Naive thymus-derived CD4-positive, alpha-beta T cell (primary cell): ENCODE measurements at regions of chr4 and their contacts with region 1.

Region 1: DNA sequence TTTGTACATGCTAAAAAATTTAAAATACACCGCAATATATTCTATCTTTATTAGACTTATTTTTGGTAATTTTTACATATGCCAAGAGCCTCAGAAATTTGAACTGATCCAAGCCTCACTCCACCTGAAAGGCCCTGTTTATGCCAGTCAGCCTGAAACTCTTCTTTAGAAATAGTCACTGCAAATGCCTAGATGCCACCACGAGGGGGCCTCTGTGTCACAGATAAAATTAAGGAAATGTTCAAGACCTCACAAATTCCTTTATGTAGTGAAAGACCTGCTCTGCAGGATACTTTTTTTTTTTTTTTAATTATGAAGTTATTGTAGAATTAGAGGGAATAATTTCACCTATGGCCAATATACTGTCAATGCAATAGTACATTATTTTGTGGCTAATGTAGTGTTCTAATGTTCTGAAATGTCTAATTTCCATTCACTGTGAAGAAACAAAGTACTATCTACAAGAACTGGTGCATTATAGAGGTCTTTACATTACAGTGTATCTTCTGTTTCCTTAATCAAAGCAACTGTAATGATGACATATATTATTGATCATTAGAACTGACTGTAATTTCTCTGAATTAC is 69.8 kb downstream of the DTHD1 start:
- DNase-seq: peak; percentile 45 to 76 (median 68)
- ATAC-seq: peak; percentile 91
- H3K4me3 ChIP-seq: no peak overlapping the region
- H3K4me3 Mint-ChIP-seq: no peak overlapping the region
- H3K27ac ChIP-seq: no peak overlapping the region
- H3K27ac Mint-ChIP-seq: peak overlapping the region in 1 of 9 donors; percentile 4
- H3K4me1 ChIP-seq: no peaks in the 10 kb centered on the region
- H3K4me1 Mint-ChIP-seq: peaks cover 0 to 31% (median 0%) of the 10 kb centered on the region in 7 donors
- H3K27me3 ChIP-seq: no peaks in the 10 kb centered on the region
- H3K27me3 Mint-ChIP-seq: peaks cover 0 to 19% (median 0%) of the 10 kb centered on the region in 5 donors

Region 2: DNA sequence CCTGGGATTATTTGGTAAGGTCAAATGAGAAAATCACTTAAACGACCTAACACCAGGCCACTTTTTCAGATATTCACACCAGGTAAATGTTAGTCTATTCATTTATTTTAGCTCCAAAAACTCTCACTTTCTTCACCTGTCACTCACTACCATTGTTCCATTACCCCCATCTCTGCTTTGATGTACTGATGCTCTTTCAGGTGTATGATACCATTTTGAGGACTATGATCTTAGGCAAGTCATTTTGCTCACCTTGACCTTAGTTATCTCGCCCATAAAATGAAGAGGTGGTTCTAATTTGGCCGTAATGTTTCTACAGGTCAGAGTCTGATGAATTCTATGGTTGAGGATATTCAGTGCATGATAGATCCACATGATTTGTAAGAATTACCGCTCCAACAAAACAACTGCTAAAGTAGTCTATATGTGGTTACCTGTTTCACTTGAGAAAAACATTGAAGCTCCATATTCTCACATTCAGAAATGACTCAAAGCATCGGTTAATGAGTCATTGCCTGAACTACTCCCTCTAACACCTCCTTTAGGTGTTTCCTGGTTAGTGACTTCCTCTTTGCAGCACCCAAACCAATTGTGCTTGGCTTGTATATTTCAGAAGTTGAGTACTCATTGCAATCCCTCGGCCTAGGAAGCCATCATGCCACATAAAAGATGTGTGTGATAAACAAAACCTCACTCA is 65.2 kb before region 1 on chr4:
- CTCF ChIA-PET with region 1: no interaction called
- POLR2A ChIA-PET with region 1: no interaction called
- intact Hi-C with region 1: loop called in 1 of 2 experiments (anchors 1 kb)
- DNase-seq: peak in 8 of 9 donors; percentile 15 to 62 (median 47)
- ATAC-seq: peak; percentile 93
- H3K4me3 ChIP-seq: peak overlapping the region; percentile 22
- H3K4me3 Mint-ChIP-seq: peak overlapping the region in 7 of 10 donors; percentile 25 to 80 (median 38)
- H3K27ac ChIP-seq: peak overlapping the region; percentile 8
- H3K27ac Mint-ChIP-seq: peak overlapping the region in 8 of 9 donors; percentile 38 to 96 (median 71)
- H3K4me1 ChIP-seq: peaks cover 6 to 28% of the 10 kb centered on the region in 2 donors
- H3K4me1 Mint-ChIP-seq: peaks cover 5 to 65% (median 11%) of the 10 kb centered on the region in 7 donors
- H3K27me3 ChIP-seq: no peaks in the 10 kb centered on the region
- H3K27me3 Mint-ChIP-seq: no peaks in the 10 kb centered on the region

Region 3: DNA sequence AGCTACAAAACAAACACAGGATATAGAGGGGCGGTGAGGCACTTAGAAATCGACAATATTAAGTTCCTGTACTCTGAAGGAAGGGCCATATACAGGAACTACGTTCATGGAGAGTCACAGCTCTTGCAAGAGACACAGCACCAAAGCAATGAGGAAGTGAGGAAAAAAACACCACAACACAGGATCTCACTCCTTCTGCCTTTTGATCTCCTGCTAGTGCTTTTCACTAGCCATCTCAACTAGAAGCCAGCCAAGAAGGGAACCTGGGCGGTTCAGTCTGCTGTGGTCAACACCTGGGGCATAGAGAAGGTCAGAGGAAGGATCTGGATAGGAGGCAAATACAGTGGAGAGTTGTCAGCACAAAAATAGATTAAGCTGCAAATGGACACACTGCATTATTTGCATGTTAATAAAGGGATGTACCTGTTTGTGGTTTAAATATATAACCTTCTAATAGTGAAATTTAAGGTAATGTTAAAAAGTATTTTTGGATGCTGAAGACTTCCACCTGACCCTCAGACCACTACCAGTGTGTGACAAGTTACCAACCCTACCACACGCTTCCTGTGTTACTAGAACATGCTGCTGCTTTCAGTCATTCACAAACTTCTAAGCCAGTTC is 34.9 kb after region 1 on chr4:
- CTCF ChIA-PET with region 1: no interaction called
- POLR2A ChIA-PET with region 1: no interaction called
- intact Hi-C with region 1: loop called (anchors 1 kb)
- DNase-seq: peak; percentile 8 to 89 (median 82)
- ATAC-seq: peak; percentile 99
- H3K4me3 ChIP-seq: peak overlapping the region; percentile 29
- H3K4me3 Mint-ChIP-seq: peak overlapping the region; percentile 46 to 84 (median 70)
- H3K27ac ChIP-seq: peak overlapping the region; percentile 70
- H3K27ac Mint-ChIP-seq: peak overlapping the region; percentile 92 to 99 (median 94)
- H3K4me1 ChIP-seq: peaks cover 22% of the 10 kb centered on the region in 2 donors
- H3K4me1 Mint-ChIP-seq: peaks cover 19 to 51% (median 40%) of the 10 kb centered on the region in 7 donors
- H3K27me3 ChIP-seq: no peaks in the 10 kb centered on the region
- H3K27me3 Mint-ChIP-seq: peaks cover 0 to 11% (median 0%) of the 10 kb centered on the region in 5 donors

Region 4: GRCh38 chr4:36399762-36400353 is 48.7 kb after region 1 on chr4:
- CTCF ChIA-PET with region 1: interaction called, 62 read pairs
- POLR2A ChIA-PET with region 1: interaction called, 3 read pairs
- intact Hi-C with region 1: loop called (anchors 1 kb)
- DNase-seq: peak in 6 of 9 donors; percentile 37 to 59 (median 56)
- ATAC-seq: peak; percentile 81
- H3K4me3 ChIP-seq: no peak overlapping the region
- H3K4me3 Mint-ChIP-seq: no peak overlapping the region
- H3K27ac ChIP-seq: no peak overlapping the region
- H3K27ac Mint-ChIP-seq: no peak overlapping the region
- H3K4me1 ChIP-seq: peaks cover 0 to 3% of the 10 kb centered on the region in 2 donors
- H3K4me1 Mint-ChIP-seq: peaks cover 0 to 9% (median 6%) of the 10 kb centered on the region in 7 donors
- H3K27me3 ChIP-seq: no peaks in the 10 kb centered on the region
- H3K27me3 Mint-ChIP-seq: peaks cover 0 to 26% (median 2%) of the 10 kb centered on the region in 5 donors

Region 5: DNA sequence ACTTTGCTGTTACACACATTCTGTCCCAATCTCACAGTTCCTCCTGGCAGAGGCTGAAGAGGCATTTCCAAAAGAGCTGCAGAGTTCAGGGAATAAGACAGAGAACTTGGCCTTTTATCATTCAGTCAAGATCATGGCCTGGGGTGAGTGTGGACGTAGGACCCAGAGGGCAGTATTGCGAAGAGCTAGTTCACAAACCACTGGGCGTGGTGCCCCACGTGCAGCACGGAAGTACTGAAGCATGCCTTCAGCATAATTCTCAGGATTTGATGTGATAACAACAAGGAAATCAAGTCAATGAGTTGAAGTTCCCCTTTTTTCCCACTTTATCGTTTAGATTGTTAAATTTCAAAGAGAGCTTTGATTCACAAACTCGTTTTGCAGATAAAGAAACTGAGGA is 1217.3 kb after region 1 on chr4:
- CTCF ChIA-PET with region 1: no interaction called
- POLR2A ChIA-PET with region 1: no interaction called
- intact Hi-C with region 1: loop called in 1 of 2 experiments (anchors 2 kb)
- DNase-seq: no peak
- ATAC-seq: no peak
- H3K4me3 ChIP-seq: no peak overlapping the region
- H3K4me3 Mint-ChIP-seq: no peak overlapping the region
- H3K27ac ChIP-seq: no peak overlapping the region
- H3K27ac Mint-ChIP-seq: peak overlapping the region in 1 of 9 donors; percentile 74
- H3K4me1 ChIP-seq: no peaks in the 10 kb centered on the region
- H3K4me1 Mint-ChIP-seq: peaks cover 0 to 3% (median 0%) of the 10 kb centered on the region in 7 donors
- H3K27me3 ChIP-seq: no peaks in the 10 kb centered on the region
- H3K27me3 Mint-ChIP-seq: peaks cover 0 to 3% (median 0%) of the 10 kb centered on the region in 5 donors